Dendritic cell treated with granulocyte-macrophage colony-stimulating factor and Interleukin-4, amounts not matched to agents 40 ng/mL and 50 ng/mL, for 4 days (primary cell): ENCODE measurements at regions of chr12 and their contacts with region 1.

Region 1: DNA sequence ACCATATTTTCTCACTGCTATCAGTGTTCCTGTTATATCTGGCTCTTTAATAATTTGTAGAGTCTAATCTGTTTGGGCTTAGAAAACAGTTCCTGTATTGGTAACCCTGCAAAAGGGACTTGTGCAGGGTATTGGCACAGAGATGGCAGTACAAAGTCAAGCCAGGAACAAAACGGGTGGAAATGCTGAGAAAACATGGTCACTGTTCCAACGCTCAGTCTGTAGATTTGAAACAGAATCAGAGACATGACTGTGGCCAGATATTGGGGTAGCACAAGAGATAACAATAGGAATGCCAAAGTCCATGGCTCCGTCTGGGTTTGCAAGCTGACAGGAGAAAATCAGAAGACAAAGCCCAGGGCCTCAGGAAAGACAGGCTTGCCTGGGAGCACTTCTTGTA is 290.7 kb upstream of the PDE3A start:
- H3K4me3 Mint-ChIP-seq: no peak overlapping the region
- H3K27ac Mint-ChIP-seq: no peak overlapping the region
- H3K4me1 Mint-ChIP-seq: no peaks in the 10 kb centered on the region
- H3K27me3 Mint-ChIP-seq: no peaks in the 10 kb centered on the region

Region 2: GRCh38 chr12:19833775-19834501 is 243.7 kb before region 1 on chr12:
- intact Hi-C with region 1: loop called (anchors 10 kb)
- H3K4me3 Mint-ChIP-seq: no peak overlapping the region
- H3K27ac Mint-ChIP-seq: no peak overlapping the region
- H3K4me1 Mint-ChIP-seq: no peaks in the 10 kb centered on the region
- H3K27me3 Mint-ChIP-seq: no peaks in the 10 kb centered on the region